B cell (primary cell): ENCODE measurements at regions of chr2 and their contacts with region 1.

Region 1: GRCh38 chr2:47767880-47768609 is 14.9 kb upstream of the MSH6 start:
- DNase-seq: peak; percentile 80
- ATAC-seq: peak; percentile 96
- H3K4me3 ChIP-seq: peak overlapping the region in 1 of 5 experiments; percentile 32
- H3K4me3 Mint-ChIP-seq: peak overlapping the region; percentile 46
- H3K27ac ChIP-seq: no peak overlapping the region
- H3K27ac Mint-ChIP-seq: peak overlapping the region; percentile 18
- H3K4me1 ChIP-seq: peaks cover 4 to 9% of the 10 kb centered on the region in 2 donors
- H3K4me1 Mint-ChIP-seq: peaks cover 6% of the 10 kb centered on the region
- H3K27me3 ChIP-seq: peaks cover 0 to 5% (median 0%) of the 10 kb centered on the region in 4 experiments
- H3K27me3 Mint-ChIP-seq: no peaks in the 10 kb centered on the region
- CTCF ChIP-seq: peak; percentile 98

Region 2: GRCh38 chr2:47386551-47386950 is 381.5 kb before region 1 on chr2:
- CTCF ChIA-PET with region 1: interaction called, 21 read pairs
- POLR2A ChIA-PET with region 1: no interaction called
- intact Hi-C with region 1: loop called (anchors 5 kb)
- DNase-seq: no peak
- ATAC-seq: no peak
- H3K4me3 ChIP-seq: no peak overlapping the region
- H3K4me3 Mint-ChIP-seq: no peak overlapping the region
- H3K27ac ChIP-seq: no peak overlapping the region
- H3K27ac Mint-ChIP-seq: no peak overlapping the region
- H3K4me1 ChIP-seq: no peaks in the 10 kb centered on the region
- H3K4me1 Mint-ChIP-seq: no peaks in the 10 kb centered on the region
- H3K27me3 ChIP-seq: no peaks in the 10 kb centered on the region
- H3K27me3 Mint-ChIP-seq: peaks cover 4% of the 10 kb centered on the region
- CTCF ChIP-seq: no peak

Region 3: GRCh38 chr2:47654790-47655562 is 113.1 kb before region 1 on chr2:
- CTCF ChIA-PET with region 1: interaction called, 12 read pairs
- POLR2A ChIA-PET with region 1: no interaction called
- intact Hi-C with region 1: loop called (anchors 5 kb)
- DNase-seq: peak; percentile 74
- ATAC-seq: peak; percentile 91
- H3K4me3 ChIP-seq: no peak overlapping the region
- H3K4me3 Mint-ChIP-seq: peak overlapping the region; percentile 60
- H3K27ac ChIP-seq: peak overlapping the region; percentile 13 to 67
- H3K27ac Mint-ChIP-seq: peak overlapping the region; percentile 83
- H3K4me1 ChIP-seq: peaks cover 35 to 53% of the 10 kb centered on the region in 2 donors
- H3K4me1 Mint-ChIP-seq: peaks cover 58% of the 10 kb centered on the region
- H3K27me3 ChIP-seq: no peaks in the 10 kb centered on the region
- H3K27me3 Mint-ChIP-seq: no peaks in the 10 kb centered on the region
- CTCF ChIP-seq: no peak

Region 4: GRCh38 chr2:47724221-47724981 is 43.6 kb before region 1 on chr2:
- CTCF ChIA-PET with region 1: interaction called, 21 read pairs
- POLR2A ChIA-PET with region 1: interaction called, 3 read pairs
- intact Hi-C with region 1: no loop called
- DNase-seq: peak; percentile 94
- ATAC-seq: peak; percentile 88
- H3K4me3 ChIP-seq: peak overlapping the region in 1 of 5 experiments; percentile 22
- H3K4me3 Mint-ChIP-seq: peak overlapping the region; percentile 59
- H3K27ac ChIP-seq: peak overlapping the region; percentile 91 to 92
- H3K27ac Mint-ChIP-seq: peak overlapping the region; percentile 94
- H3K4me1 ChIP-seq: peaks cover 58 to 73% of the 10 kb centered on the region in 2 donors
- H3K4me1 Mint-ChIP-seq: peaks cover 69% of the 10 kb centered on the region
- H3K27me3 ChIP-seq: no peaks in the 10 kb centered on the region
- H3K27me3 Mint-ChIP-seq: no peaks in the 10 kb centered on the region
- CTCF ChIP-seq: no peak

Region 5: DNA sequence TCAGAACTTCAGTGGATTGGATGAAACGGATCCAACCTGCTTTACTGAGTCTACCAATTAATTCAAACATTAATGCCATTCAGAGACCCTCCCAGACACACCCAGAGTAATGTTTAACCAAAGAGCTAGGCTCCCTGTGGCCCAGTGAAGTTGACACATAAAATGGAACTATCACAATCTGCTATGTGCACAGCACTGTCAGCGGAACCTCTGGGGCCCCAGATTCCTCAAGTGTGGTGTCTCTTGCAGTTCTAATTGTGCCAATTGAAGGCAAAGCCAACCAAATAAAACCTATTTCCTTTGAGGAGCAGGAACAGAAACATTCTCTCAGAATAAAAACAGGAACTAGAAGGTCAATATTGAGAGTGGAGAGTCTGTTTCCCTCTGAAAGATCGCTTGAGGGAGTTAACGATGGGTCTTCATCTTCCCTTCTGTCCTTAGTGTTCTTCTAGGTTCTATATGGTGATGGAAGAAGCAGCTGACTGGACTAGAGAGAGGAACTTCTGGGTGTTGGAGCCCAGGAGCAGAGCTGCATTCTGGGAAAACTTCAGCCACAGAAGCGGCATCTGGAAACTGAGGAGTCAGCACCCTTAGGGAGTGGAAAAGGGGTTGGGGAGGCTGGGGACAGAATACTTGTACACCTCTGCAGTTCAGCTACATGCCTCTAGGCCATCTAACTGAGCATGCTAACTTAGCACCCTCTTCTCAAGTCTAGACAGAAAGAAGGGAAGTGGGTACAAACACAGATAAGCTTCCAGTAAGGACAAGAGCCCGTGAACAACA is 312.7 kb after region 1 on chr2:
- CTCF ChIA-PET with region 1: no interaction called
- POLR2A ChIA-PET with region 1: no interaction called
- intact Hi-C with region 1: no loop called
- DNase-seq: peak; percentile 11
- ATAC-seq: no peak
- H3K4me3 ChIP-seq: no peak overlapping the region
- H3K4me3 Mint-ChIP-seq: no peak overlapping the region
- H3K27ac ChIP-seq: no peak overlapping the region
- H3K27ac Mint-ChIP-seq: no peak overlapping the region
- H3K4me1 ChIP-seq: peaks cover 15 to 17% of the 10 kb centered on the region in 2 donors
- H3K4me1 Mint-ChIP-seq: peaks cover 12% of the 10 kb centered on the region
- H3K27me3 ChIP-seq: no peaks in the 10 kb centered on the region
- H3K27me3 Mint-ChIP-seq: no peaks in the 10 kb centered on the region
- CTCF ChIP-seq: no peak

Region 6: GRCh38 chr2:49123600-49123999 is 1355.6 kb after region 1 on chr2:
- CTCF ChIA-PET with region 1: no interaction called
- POLR2A ChIA-PET with region 1: no interaction called
- intact Hi-C with region 1: no loop called
- DNase-seq: no peak
- ATAC-seq: no peak
- H3K4me3 ChIP-seq: no peak overlapping the region
- H3K4me3 Mint-ChIP-seq: no peak overlapping the region
- H3K27ac ChIP-seq: no peak overlapping the region
- H3K27ac Mint-ChIP-seq: no peak overlapping the region
- H3K4me1 ChIP-seq: no peaks in the 10 kb centered on the region
- H3K4me1 Mint-ChIP-seq: no peaks in the 10 kb centered on the region
- H3K27me3 ChIP-seq: no peaks in the 10 kb centered on the region
- H3K27me3 Mint-ChIP-seq: no peaks in the 10 kb centered on the region
- CTCF ChIP-seq: no peak